Activated B cell treated with CpG ODN at 0.5 μM for 24 hours (primary cell): ENCODE measurements at regions of chr10 and their contacts with region 1.

Region 1: DNA sequence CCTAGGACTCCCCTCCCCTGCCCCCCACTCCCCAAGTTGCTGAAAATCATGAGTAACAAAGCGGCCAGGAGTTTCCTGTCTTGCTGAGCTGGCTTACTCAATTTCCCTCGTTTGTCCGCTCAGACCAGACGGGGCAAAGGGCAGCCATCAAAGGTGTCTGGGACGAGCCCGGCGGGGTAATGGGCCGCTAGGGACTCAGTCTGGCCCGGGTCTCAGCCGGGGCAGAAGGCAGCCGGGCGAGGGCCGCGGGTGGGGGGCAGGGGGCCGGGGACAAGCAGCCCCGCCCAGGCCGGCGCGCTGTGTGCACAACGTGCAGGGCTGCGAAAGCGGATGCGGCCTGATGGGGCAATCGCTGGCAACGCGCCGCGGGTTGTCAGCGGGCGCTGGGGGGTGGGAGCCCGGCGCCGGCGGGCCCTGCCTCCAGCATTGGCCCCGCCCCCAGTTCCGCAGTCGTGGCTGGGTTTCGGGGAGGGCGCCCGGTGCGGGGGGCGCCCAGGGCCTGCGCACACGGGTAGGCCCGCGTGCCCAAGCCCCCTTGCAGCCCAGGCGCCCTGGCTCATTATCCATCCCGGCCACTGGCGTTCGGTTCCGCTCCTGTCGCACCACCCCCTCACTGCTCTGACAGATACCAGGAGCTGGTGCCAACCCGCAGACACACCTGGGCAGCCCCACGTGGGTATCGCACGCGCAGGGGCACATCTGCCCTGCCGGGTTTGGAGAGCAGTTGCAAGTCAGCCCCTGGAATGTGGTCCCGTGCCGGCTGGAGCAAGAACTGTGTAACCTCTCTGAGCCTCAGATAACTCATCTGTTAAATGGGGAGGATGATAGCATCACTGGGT is 35.1 kb downstream of the DNAJB12 start:
- DNase-seq: peak; percentile 87
- ATAC-seq: peak; percentile 52
- H3K4me3 Mint-ChIP-seq: peak overlapping the region; percentile 81
- H3K27ac Mint-ChIP-seq: peak overlapping the region; percentile 98
- H3K4me1 Mint-ChIP-seq: peaks cover 86% of the 10 kb centered on the region
- H3K27me3 Mint-ChIP-seq: no peaks in the 10 kb centered on the region
- CTCF ChIP-seq: no peak

Region 2: GRCh38 chr10:72097448-72098300 is 222.0 kb before region 1 on chr10:
- CTCF ChIA-PET with region 1: no interaction called
- POLR2A ChIA-PET with region 1: no interaction called
- intact Hi-C with region 1: no loop called
- DNase-seq: no peak
- ATAC-seq: no peak
- H3K4me3 Mint-ChIP-seq: no peak overlapping the region
- H3K27ac Mint-ChIP-seq: no peak overlapping the region
- H3K4me1 Mint-ChIP-seq: no peaks in the 10 kb centered on the region
- H3K27me3 Mint-ChIP-seq: no peaks in the 10 kb centered on the region
- CTCF ChIP-seq: no peak

Region 3: GRCh38 chr10:72126184-72126871 is 193.3 kb before region 1 on chr10:
- CTCF ChIA-PET with region 1: interaction called, 7 read pairs
- POLR2A ChIA-PET with region 1: interaction called, 13 read pairs
- intact Hi-C with region 1: no loop called
- DNase-seq: no peak
- ATAC-seq: no peak
- H3K4me3 Mint-ChIP-seq: no peak overlapping the region
- H3K27ac Mint-ChIP-seq: peak overlapping the region; percentile 42
- H3K4me1 Mint-ChIP-seq: peaks cover 2% of the 10 kb centered on the region
- H3K27me3 Mint-ChIP-seq: no peaks in the 10 kb centered on the region
- CTCF ChIP-seq: no peak

Region 4: DNA sequence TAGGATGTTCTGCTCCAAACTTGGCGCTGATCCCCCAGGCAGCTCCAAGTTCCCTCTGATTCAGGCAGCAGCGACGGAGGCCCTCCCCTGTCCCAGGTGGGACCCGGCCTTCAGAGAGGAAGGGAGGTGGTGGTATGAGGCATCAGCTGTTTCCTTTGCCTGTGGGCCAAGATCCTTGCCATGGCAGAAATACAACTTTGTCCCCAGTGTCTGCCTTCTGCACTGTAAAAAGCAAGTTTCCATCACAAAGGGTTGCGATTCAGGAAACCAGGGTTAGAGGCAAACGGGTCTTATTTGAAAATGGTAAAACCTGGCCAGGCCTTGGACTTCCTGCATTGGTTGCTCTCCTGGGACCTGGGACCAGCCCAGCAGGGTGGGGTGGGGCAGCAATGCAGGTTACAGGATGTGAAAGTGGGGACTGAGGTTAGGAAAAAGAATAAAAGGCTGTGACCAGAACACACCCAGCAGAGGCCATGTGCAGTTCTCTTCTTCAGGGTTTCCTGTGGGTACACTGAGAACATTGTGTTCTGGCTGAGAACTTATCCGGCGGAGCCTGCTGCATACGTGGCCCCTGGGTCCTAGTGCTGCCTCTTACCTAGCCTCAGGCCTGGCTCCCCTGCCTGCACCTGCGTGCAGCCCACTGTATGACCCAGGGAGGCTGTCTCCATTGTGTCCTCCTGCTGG is 71.0 kb before region 1 on chr10:
- CTCF ChIA-PET with region 1: no interaction called
- POLR2A ChIA-PET with region 1: interaction called, 101 read pairs
- intact Hi-C with region 1: loop called (anchors 1 kb)
- DNase-seq: peak; percentile 54
- ATAC-seq: peak; percentile 78
- H3K4me3 Mint-ChIP-seq: peak overlapping the region; percentile 74
- H3K27ac Mint-ChIP-seq: peak overlapping the region; percentile 97
- H3K4me1 Mint-ChIP-seq: peaks cover 85% of the 10 kb centered on the region
- H3K27me3 Mint-ChIP-seq: no peaks in the 10 kb centered on the region
- CTCF ChIP-seq: no peak

Region 5: DNA sequence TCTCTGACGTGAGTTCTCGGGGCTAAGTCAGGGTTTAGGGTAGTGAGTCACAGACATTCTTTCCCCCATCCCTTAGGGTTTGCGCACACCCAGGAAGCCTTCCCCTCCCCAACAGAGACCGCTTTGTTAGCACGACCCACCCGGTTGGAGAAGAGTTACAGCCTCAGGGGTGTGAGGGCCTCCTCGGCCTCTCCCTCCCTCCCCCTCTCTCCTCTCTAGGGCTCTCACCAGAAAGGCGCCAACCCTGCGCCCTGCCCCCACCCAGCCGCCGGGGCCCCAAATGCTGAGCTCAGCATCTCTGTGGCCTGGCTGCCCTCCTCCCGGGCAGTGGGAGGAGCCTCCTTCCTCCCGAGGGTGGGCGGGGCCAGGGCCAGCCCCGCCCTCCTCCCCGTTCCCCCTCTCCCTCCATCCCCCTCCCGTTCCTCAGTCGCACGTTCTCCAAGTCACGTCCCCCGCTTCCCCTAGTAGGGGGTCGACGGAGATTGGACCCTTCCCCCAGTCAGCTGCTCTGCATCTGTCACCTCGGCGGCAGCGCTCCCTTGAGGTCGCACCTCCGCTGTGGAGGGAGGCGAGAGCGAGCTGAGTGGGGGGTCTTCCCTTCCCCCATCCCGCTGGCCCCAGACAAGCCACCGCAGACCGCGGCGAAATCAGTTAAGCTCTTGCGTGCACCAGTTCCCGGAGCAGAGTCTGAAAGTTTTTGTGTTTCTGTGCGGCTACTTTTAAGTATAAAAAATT is 58.9 kb before region 1 on chr10:
- CTCF ChIA-PET with region 1: interaction called, 7 read pairs
- POLR2A ChIA-PET with region 1: interaction called, 141 read pairs
- intact Hi-C with region 1: loop called (anchors 1 kb)
- DNase-seq: peak; percentile 70
- ATAC-seq: peak; percentile 71
- H3K4me3 Mint-ChIP-seq: peak overlapping the region; percentile 91
- H3K27ac Mint-ChIP-seq: peak overlapping the region; percentile 96
- H3K4me1 Mint-ChIP-seq: peaks cover 58% of the 10 kb centered on the region
- H3K27me3 Mint-ChIP-seq: no peaks in the 10 kb centered on the region
- CTCF ChIP-seq: no peak

Region 6: GRCh38 chr10:72285972-72286521 is 33.6 kb before region 1 on chr10:
- CTCF ChIA-PET with region 1: interaction called, 4 read pairs
- POLR2A ChIA-PET with region 1: interaction called, 1,996 read pairs
- intact Hi-C with region 1: no loop called
- DNase-seq: no peak
- ATAC-seq: peak; percentile 11
- H3K4me3 Mint-ChIP-seq: peak overlapping the region; percentile 33
- H3K27ac Mint-ChIP-seq: peak overlapping the region; percentile 73
- H3K4me1 Mint-ChIP-seq: peaks cover 40% of the 10 kb centered on the region
- H3K27me3 Mint-ChIP-seq: no peaks in the 10 kb centered on the region
- CTCF ChIP-seq: no peak

Region 7: DNA sequence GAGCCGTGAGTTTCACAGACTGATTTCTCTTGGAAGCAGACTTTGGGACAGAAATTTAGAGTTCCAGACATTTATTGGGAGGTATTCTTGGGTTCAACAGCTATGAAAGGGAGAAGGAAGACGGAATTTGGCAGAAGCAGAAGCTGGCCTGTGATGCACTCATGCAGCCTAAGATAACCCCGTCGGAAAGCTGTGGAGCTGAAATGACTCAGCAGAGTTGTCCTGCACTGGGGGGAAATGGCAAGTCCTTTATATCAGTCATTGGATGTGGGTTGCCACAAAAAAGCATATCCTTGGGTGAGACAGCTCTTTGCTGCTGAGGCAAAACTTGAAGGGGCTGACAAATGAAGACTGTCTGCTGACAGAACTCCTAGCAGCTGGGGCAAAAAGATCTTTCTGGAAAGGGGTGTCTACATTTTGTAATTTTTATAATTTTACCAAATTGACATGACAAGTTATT is 317.8 kb after region 1 on chr10:
- CTCF ChIA-PET with region 1: no interaction called
- POLR2A ChIA-PET with region 1: no interaction called
- intact Hi-C with region 1: no loop called
- DNase-seq: no peak
- ATAC-seq: no peak
- H3K4me3 Mint-ChIP-seq: no peak overlapping the region
- H3K27ac Mint-ChIP-seq: no peak overlapping the region
- H3K4me1 Mint-ChIP-seq: no peaks in the 10 kb centered on the region
- H3K27me3 Mint-ChIP-seq: no peaks in the 10 kb centered on the region
- CTCF ChIP-seq: no peak